Gastrocnemius medialis (tissue), 4 donors: ENCODE measurements at regions of chr18 and their contacts with region 1.

Region 1: DNA sequence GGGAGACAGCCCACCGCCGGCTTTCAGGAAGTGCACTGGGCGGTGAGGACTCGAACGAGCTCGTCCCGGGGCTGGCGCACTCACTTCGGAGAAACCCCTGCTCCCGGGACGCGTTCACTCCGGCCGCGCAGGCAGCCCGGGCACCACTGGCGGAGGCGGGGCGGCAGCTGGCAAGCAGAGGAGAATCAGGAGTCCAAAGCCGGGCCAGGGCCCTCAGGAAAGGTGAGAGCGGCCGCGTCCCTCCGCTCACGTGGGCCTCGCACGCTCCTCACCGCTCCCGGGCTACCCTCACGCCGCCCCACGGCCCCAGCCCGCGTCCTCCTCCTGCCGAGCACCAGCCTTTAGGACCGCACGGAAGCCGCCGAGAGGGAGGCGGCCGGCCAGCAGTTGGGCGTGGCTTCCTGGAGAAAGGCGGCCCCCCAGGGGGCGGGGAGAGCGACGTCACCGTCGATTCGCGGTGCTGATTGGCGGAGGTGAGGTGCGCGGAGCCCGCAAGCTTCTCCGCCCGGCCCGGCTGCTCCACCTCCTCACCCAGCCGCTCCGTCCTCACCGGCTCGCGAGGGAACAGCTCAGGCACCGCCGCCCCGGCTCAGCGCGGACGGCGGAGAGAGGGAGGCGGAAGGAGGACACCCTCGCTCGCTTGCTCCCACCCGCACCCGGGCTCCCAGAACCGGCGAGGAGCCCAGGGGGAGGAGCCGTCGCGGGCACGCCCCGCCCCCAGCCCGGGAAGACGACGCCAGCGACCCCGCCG is at the start of gene ZCCHC2:
- DNase-seq: peak; percentile 98
- ATAC-seq: peak; percentile 56 to 68
- H3K4me3 ChIP-seq: peak within 1 kb of the TSS; percentile 74 to 96 (median 86)
- H3K27ac ChIP-seq: peak within 1 kb of the TSS; percentile 98 to 100 (median 99)
- H3K4me1 ChIP-seq: peaks cover 17 to 27% of the 10 kb centered on the region in 2 donors
- H3K27me3 ChIP-seq: no peaks in the 10 kb centered on the region
- CTCF ChIP-seq: no peak
- POLR2A ChIP-seq: peak; percentile 95 to 98
- total RNA-seq, gene ZCCHC2: 22.1 to 37.9 (median 32.0) TPM

Region 2: GRCh38 chr18:62413206-62413605 is 109.5 kb before region 1 on chr18:
- in situ Hi-C with region 1: no loop called
- intact Hi-C with region 1: no loop called
- DNase-seq: no peak
- ATAC-seq: peak; percentile 53 to 72
- H3K4me3 ChIP-seq: no peak overlapping the region
- H3K27ac ChIP-seq: peak overlapping the region in 1 of 4 donors; percentile 34
- H3K4me1 ChIP-seq: peaks cover 4 to 6% of the 10 kb centered on the region in 2 donors
- H3K27me3 ChIP-seq: no peaks in the 10 kb centered on the region
- CTCF ChIP-seq: no peak
- POLR2A ChIP-seq: no peak

Region 3: GRCh38 chr18:62425465-62426195 is 97.0 kb before region 1 on chr18:
- in situ Hi-C with region 1: loop called in 1 of 4 experiments (anchors 5 kb)
- intact Hi-C with region 1: loop called (anchors 1 kb)
- DNase-seq: peak; percentile 86 to 92
- ATAC-seq: peak; percentile 81 to 82
- H3K4me3 ChIP-seq: peak overlapping the region; percentile 31 to 48 (median 40)
- H3K27ac ChIP-seq: peak overlapping the region; percentile 85 to 97 (median 96)
- H3K4me1 ChIP-seq: peaks cover 23 to 25% of the 10 kb centered on the region in 2 donors
- H3K27me3 ChIP-seq: no peaks in the 10 kb centered on the region
- CTCF ChIP-seq: peak; percentile 88 to 93 (median 90)
- POLR2A ChIP-seq: peak; percentile 45 to 73

Region 4: DNA sequence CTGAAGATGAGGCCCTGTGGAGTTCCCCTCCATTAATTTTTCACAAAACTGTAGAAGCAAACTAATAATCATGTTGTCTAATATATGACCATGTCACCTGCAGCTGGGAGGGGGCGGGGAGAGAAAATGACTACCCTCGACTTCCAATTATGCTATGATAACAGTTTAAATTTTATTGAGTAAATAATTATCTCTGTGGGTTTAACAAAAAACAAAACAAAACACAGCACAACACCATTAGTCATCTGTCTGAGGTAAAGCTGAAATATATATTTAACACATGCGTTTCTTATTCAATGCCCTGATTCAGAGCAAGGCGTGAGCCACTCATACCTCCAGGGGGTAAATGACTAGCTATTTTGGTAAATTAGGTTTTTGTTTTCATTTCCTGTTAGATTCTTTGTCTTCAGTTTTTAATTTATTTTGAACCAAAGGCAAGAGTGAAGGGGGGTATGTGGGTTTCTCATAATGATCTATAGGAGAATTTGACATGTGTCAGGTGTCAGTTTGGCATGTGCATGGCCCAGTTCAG is 77.2 kb before region 1 on chr18:
- in situ Hi-C with region 1: loop called in 1 of 4 experiments (anchors 10 kb)
- intact Hi-C with region 1: no loop called
- DNase-seq: no peak
- ATAC-seq: no peak
- H3K4me3 ChIP-seq: no peak overlapping the region
- H3K27ac ChIP-seq: no peak overlapping the region
- H3K4me1 ChIP-seq: peaks cover 1 to 3% of the 10 kb centered on the region in 2 donors
- H3K27me3 ChIP-seq: no peaks in the 10 kb centered on the region
- CTCF ChIP-seq: no peak
- POLR2A ChIP-seq: no peak

Region 5: GRCh38 chr18:62450546-62451406 is 71.9 kb before region 1 on chr18:
- in situ Hi-C with region 1: loop called in 1 of 4 experiments (anchors 10 kb)
- intact Hi-C with region 1: loop called (anchors 1 kb)
- DNase-seq: peak; percentile 88 to 94
- ATAC-seq: peak; percentile 84 to 87
- H3K4me3 ChIP-seq: peak overlapping the region in 3 of 4 donors; percentile 4 to 34 (median 16)
- H3K27ac ChIP-seq: peak overlapping the region; percentile 81 to 94 (median 91)
- H3K4me1 ChIP-seq: peaks cover 22 to 23% of the 10 kb centered on the region in 2 donors
- H3K27me3 ChIP-seq: no peaks in the 10 kb centered on the region
- CTCF ChIP-seq: no peak
- POLR2A ChIP-seq: no peak

Region 6: GRCh38 chr18:62566199-62566598 is 43.5 kb after region 1 on chr18:
- in situ Hi-C with region 1: no loop called
- intact Hi-C with region 1: loop called (anchors 5 kb)
- DNase-seq: peak; percentile 40 to 70
- ATAC-seq: peak; percentile 68 to 91
- H3K4me3 ChIP-seq: no peak overlapping the region
- H3K27ac ChIP-seq: peak overlapping the region in 1 of 4 donors; percentile 19
- H3K4me1 ChIP-seq: no peaks in the 10 kb centered on the region
- H3K27me3 ChIP-seq: no peaks in the 10 kb centered on the region
- CTCF ChIP-seq: peak; percentile 15 to 45 (median 39)
- POLR2A ChIP-seq: no peak

Region 7: GRCh38 chr18:62584241-62585120 is 61.8 kb after region 1 on chr18:
- in situ Hi-C with region 1: no loop called
- intact Hi-C with region 1: loop called (anchors 2 kb)
- DNase-seq: peak; percentile 78 to 83
- ATAC-seq: peak; percentile 90 to 95
- H3K4me3 ChIP-seq: peak overlapping the region in 2 of 4 donors; percentile 30 to 35
- H3K27ac ChIP-seq: peak overlapping the region; percentile 63 to 70 (median 64)
- H3K4me1 ChIP-seq: peaks cover 11 to 13% of the 10 kb centered on the region in 2 donors
- H3K27me3 ChIP-seq: no peaks in the 10 kb centered on the region
- CTCF ChIP-seq: peak; percentile 95 to 99 (median 97)
- POLR2A ChIP-seq: no peak

Region 8: DNA sequence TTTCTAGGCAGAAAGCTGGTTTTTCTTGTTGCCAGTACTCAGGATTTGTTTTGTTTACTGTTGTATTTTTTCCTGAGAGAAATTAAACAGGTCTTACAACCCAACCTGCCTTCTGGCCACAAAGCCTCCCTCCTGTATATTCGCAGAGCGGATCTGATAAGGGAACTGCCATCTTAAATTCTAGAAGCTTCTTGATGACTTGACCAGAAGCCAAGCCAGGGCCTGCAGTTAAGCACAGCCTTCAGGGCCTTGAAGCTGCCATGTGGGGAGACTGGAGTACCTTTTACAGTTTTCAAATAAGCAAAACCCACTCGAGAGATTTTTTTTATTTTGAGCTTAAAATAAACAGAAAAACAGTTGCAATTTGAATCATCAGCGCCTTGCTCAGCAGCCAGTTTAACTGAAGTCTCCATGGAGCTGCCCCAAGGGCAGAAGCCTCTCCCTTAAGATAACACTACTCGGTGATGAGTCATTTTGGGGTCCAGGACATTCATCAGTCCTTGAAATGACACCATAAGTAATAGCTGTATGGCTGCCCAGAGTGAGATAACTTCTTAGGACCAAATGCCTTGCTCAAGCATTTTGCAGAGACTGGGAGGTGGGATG is 141.2 kb after region 1 on chr18:
- in situ Hi-C with region 1: no loop called
- intact Hi-C with region 1: no loop called
- DNase-seq: no peak
- ATAC-seq: no peak
- H3K4me3 ChIP-seq: no peak overlapping the region
- H3K27ac ChIP-seq: peak overlapping the region in 2 of 4 donors; percentile 13 to 31
- H3K4me1 ChIP-seq: no peaks in the 10 kb centered on the region
- H3K27me3 ChIP-seq: no peaks in the 10 kb centered on the region
- CTCF ChIP-seq: no peak
- POLR2A ChIP-seq: no peak

Region 9: DNA sequence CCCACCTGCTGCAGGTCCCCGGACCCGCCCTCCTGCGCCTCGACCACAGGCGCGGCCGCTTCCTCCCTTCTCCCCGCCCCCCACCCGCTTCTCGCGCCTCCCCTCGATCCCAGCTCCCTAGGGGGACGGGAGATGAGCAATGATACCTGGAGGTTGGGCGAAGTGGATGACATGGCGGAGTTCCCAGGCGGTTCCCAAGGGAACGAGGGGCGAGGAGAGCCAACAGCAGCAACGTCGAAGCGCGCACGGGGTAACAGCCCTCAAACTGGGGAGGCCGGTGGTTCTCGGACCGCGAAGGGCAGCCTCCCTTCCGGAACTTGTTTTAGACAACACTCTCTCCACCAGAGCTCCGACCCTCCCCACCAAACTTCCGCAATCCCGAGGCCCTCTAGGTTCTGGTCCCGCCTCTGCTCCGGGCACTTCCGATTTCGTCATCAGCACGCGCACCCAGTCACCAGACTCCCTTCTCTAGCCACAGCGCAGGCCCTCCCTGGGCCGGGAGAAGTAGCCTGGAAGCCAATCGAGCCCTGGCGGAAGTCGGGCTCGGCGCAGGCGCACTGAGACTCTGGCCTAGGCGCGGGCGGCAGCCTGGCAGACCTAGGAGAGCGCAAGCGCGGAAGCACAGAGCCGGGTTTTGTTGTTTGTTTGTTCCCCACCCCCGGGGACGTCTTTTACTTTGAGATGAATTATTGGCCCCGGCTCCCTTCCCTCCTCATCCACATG is 899.6 kb after region 1 on chr18 and contains the start of gene VPS4B:
- in situ Hi-C with region 1: no loop called
- intact Hi-C with region 1: loop called (anchors 2 kb)
- DNase-seq: peak; percentile 98 to 99
- ATAC-seq: peak; percentile 99
- H3K4me3 ChIP-seq: peak within 1 kb of the TSS; percentile 93 to 96 (median 94)
- H3K27ac ChIP-seq: peak within 1 kb of the TSS; percentile 88 to 97 (median 93)
- H3K4me1 ChIP-seq: peaks cover 14 to 16% of the 10 kb centered on the region in 2 donors
- H3K27me3 ChIP-seq: no peaks in the 10 kb centered on the region
- CTCF ChIP-seq: peak in 1 of 5 experiments; percentile 20
- POLR2A ChIP-seq: peak; percentile 81 to 84
- total RNA-seq, gene VPS4B: 13.4 to 18.2 (median 16.0) TPM